B cell (primary cell): ENCODE measurements at regions of chr17 and their contacts with region 1.

Region 1: DNA sequence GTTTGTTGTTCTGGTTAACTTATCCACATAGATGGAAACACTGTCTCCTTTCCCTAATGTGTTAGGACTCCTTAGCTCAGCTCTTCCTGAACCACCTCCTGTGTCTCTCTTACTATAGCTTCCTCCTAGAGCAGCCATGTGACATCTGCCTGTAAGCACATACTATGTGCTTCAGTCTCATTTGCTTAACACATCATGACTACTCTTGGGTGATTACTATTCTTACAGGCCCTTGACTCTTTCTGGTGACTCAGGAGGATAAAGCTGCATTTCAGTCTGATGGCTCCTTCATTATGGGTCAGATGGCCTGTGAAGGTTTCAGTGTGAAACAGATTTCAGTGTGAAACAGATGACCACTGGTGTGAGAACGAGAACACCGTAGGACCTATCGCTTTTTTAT is 320 bp upstream of the KRTAP4-2 start:
- DNase-seq: peak; percentile 45
- ATAC-seq: peak; percentile 71
- H3K4me3 ChIP-seq: no peak overlapping the region
- H3K4me3 Mint-ChIP-seq: peak overlapping the region; percentile 54
- H3K27ac ChIP-seq: no peak overlapping the region
- H3K27ac Mint-ChIP-seq: peak overlapping the region; percentile 42
- H3K4me1 ChIP-seq: peaks cover 39 to 41% of the 10 kb centered on the region in 2 donors
- H3K4me1 Mint-ChIP-seq: peaks cover 42% of the 10 kb centered on the region
- H3K27me3 ChIP-seq: no peaks in the 10 kb centered on the region
- H3K27me3 Mint-ChIP-seq: peaks cover 3% of the 10 kb centered on the region
- CTCF ChIP-seq: no peak

Region 2: DNA sequence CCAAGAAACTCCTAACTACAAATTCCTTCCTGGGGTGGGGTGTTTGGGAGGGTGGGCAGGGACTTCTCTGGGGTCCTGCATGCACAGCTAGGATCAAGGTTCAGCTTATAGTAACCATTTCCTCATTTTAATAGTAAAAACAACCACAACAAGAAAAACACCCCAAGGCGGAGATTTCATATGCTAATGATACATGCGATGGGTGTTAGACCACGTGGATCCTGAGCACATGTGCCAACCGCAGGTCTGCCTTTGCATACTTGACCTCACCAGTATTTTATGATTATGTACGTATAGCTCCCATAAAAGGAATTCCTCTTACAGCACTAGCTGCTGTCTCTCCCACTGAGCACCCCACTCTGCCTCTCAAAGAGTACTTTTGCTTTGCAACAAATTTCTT is 62.0 kb before region 1 on chr17:
- CTCF ChIA-PET with region 1: no interaction called
- POLR2A ChIA-PET with region 1: no interaction called
- intact Hi-C with region 1: loop called (anchors 5 kb)
- DNase-seq: peak; percentile 86
- ATAC-seq: peak; percentile 71
- H3K4me3 ChIP-seq: no peak overlapping the region
- H3K4me3 Mint-ChIP-seq: peak overlapping the region; percentile 3
- H3K27ac ChIP-seq: peak overlapping the region; percentile 67 to 76
- H3K27ac Mint-ChIP-seq: peak overlapping the region; percentile 69
- H3K4me1 ChIP-seq: peaks cover 47 to 55% of the 10 kb centered on the region in 2 donors
- H3K4me1 Mint-ChIP-seq: peaks cover 34% of the 10 kb centered on the region
- H3K27me3 ChIP-seq: no peaks in the 10 kb centered on the region
- H3K27me3 Mint-ChIP-seq: peaks cover 3% of the 10 kb centered on the region
- CTCF ChIP-seq: no peak